Caco-2 (cell line): ENCODE measurements at regions of chr7 and their contacts with region 1.

Region 1: DNA sequence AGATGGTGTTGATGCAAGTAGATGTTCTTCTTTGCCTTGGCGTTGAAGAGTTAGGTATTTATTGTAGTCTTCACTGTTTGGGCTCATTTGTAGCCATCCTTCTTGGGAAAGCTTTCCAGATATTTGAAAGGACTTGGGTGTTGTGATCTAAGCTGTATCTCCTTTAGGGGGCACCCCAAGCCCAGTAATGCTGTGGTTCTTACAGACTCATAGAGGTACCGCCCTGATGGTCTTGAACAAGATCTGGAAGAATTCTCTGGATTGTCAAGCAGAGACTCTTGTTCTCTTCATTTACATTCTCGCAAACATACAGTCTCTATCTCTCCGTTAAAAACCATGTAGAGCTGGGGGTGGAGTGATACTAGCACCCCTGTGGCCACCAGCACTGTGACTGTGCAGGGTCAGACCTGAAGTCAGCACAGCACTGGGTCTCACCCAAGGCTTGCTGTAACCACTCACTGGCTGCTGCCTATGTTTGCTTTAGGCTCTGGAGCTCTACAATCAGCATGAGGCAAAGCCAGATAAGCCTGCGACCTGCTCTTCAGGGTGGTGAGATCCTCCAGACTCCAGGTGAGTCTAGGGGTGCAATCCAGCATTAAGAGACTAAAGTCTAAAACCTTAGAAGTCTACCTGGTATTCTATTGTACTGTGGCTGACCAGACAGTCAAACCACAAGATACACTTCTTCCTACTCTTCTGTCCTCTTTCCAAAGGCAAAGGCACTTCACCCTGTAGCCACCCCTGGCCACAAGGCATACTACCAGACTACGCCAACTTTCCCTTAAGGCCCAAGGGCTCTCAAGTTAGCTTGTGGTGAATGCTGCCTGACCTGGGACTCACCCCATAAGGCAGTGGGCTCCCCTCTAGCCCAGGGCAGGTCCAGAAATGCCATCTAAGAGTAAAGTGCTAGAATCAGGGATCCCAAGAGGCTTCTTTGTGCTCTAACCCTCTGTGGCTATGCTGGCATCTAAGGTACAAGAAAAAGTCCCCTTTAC is 209.7 kb upstream of the TMEM196 start:
- DNase-seq: peak; percentile 81 to 82
- H3K4me3 ChIP-seq: no peak overlapping the region
- H3K4me3 Mint-ChIP-seq: no peak overlapping the region
- H3K27ac Mint-ChIP-seq: peak overlapping the region; percentile 37
- H3K4me1 ChIP-seq: peaks cover 14% of the 10 kb centered on the region
- H3K4me1 Mint-ChIP-seq: peaks cover 10% of the 10 kb centered on the region
- H3K27me3 ChIP-seq: no peaks in the 10 kb centered on the region
- H3K27me3 Mint-ChIP-seq: no peaks in the 10 kb centered on the region
- CTCF ChIP-seq: peak; percentile 46 to 63

Region 2: DNA sequence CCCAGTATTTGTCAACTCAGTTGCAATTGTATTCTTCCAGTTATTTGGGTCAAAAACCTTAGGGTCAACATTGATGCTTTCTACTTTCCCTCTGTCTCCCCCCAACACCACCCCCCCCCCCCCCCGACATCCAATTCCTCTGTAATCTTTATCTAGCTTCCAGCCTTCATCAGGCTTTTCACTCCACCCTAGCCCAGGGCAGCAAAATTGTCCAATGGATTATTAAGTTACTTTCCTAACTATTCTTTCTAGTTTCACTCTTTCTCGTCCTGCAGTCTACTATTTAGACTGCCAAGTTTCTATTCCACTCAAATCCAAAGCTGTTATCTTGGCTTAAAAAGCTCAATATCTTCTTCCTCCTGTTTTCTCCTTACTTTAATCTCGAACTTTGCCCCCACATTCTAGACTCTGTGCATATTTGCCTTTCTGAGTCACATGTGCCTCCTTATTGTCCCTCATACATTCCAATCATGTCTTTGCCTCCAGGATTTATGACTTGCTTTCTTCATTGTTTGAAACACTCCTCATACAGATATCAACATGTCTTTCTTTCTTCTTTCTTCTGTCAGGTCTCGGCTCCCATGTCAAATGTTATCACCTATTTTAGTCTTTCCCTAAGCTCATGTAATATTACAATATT is 13.2 kb before region 1 on chr7:
- CTCF ChIA-PET with region 1: interaction called, 11 read pairs
- POLR2A ChIA-PET with region 1: no interaction called
- intact Hi-C with region 1: no loop called
- DNase-seq: peak; percentile 79 to 83
- H3K4me3 ChIP-seq: no peak overlapping the region
- H3K4me3 Mint-ChIP-seq: peak overlapping the region; percentile 55
- H3K27ac Mint-ChIP-seq: peak overlapping the region; percentile 86
- H3K4me1 ChIP-seq: peaks cover 44% of the 10 kb centered on the region
- H3K4me1 Mint-ChIP-seq: peaks cover 26% of the 10 kb centered on the region
- H3K27me3 ChIP-seq: no peaks in the 10 kb centered on the region
- H3K27me3 Mint-ChIP-seq: no peaks in the 10 kb centered on the region
- CTCF ChIP-seq: no peak

Region 3: DNA sequence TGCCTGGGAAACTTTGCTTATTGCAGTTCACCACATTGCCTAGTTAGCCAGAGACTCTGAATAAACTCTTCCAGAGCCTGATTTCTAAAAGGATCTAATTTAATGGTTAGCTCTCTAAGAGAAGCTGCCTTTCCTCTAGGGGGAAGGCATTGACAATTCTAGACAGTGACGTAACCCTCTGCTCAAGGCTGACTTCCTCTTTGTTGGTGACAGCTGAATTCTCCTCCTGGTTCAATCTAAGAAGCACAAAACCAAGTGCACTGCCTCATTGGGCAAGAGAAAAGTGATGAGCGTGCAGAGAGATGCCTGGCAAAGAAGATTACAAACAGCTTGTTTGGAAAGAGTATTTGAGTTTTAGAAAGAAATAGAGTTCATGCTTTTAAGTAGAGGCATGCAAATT is 131.3 kb after region 1 on chr7:
- CTCF ChIA-PET with region 1: no interaction called
- POLR2A ChIA-PET with region 1: no interaction called
- intact Hi-C with region 1: loop called (anchors 5 kb)
- DNase-seq: no peak
- H3K4me3 ChIP-seq: no peak overlapping the region
- H3K4me3 Mint-ChIP-seq: no peak overlapping the region
- H3K27ac Mint-ChIP-seq: no peak overlapping the region
- H3K4me1 ChIP-seq: peaks cover 22% of the 10 kb centered on the region
- H3K4me1 Mint-ChIP-seq: peaks cover 5% of the 10 kb centered on the region
- H3K27me3 ChIP-seq: no peaks in the 10 kb centered on the region
- H3K27me3 Mint-ChIP-seq: no peaks in the 10 kb centered on the region
- CTCF ChIP-seq: no peak

Region 4: GRCh38 chr7:20172736-20173334 is 189.7 kb after region 1 on chr7:
- CTCF ChIA-PET with region 1: interaction called, 17 read pairs
- POLR2A ChIA-PET with region 1: no interaction called
- intact Hi-C with region 1: loop called (anchors 1 kb)
- DNase-seq: peak; percentile 78 to 82
- H3K4me3 ChIP-seq: no peak overlapping the region
- H3K4me3 Mint-ChIP-seq: no peak overlapping the region
- H3K27ac Mint-ChIP-seq: no peak overlapping the region
- H3K4me1 ChIP-seq: peaks cover 6% of the 10 kb centered on the region
- H3K4me1 Mint-ChIP-seq: peaks cover 21% of the 10 kb centered on the region
- H3K27me3 ChIP-seq: no peaks in the 10 kb centered on the region
- H3K27me3 Mint-ChIP-seq: no peaks in the 10 kb centered on the region
- CTCF ChIP-seq: peak; percentile 69 to 88

Region 5: DNA sequence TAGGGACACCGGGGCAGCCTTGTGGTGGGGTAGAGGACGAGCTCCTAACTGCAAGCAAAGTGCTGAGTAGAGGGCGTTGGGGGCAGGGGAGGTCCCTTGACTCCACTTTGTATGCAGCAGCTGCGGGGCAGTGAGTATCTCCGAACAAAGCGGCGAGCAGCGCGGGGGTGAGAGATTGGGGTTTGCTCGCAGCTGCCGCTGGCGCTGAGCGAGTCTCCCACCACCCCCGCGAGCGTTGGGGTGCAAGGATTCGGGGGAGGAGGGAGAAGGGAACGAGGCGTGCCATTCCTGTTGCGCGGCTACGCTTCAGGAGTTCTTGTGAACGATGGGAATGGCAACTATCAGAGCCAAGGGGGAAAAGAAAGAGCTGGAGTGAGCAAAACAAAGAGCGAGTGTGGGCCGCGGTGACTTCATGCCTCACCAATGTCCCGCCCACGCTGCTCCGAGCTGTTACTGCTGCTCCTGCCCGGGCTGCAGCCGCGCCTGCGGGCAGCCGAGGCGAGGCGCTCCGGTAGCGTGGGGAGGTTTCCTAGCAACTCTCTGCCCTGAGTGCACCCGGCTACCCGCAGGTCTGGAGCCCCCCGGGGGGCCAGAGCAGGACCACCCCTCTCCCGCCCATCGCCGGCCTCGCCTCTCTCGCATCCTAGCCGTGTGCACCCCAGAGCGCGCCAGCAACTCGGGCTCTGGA is 347.2 kb after region 1 on chr7 and contains the start of gene ITGB8:
- CTCF ChIA-PET with region 1: interaction called, 9 read pairs
- POLR2A ChIA-PET with region 1: no interaction called
- intact Hi-C with region 1: loop called (anchors 5 kb)
- DNase-seq: peak; percentile 76 to 77
- H3K4me3 ChIP-seq: peak within 1 kb of the TSS; percentile 91
- H3K4me3 Mint-ChIP-seq: peak within 1 kb of the TSS; percentile 85
- H3K27ac Mint-ChIP-seq: peak within 1 kb of the TSS; percentile 88
- H3K4me1 ChIP-seq: peaks cover 4% of the 10 kb centered on the region; the same call in 1 of the 2 replicates
- H3K4me1 Mint-ChIP-seq: no peaks in the 10 kb centered on the region
- H3K27me3 ChIP-seq: no peaks in the 10 kb centered on the region
- H3K27me3 Mint-ChIP-seq: no peaks in the 10 kb centered on the region
- CTCF ChIP-seq: no peak
- total RNA-seq, gene ITGB8: 3.2 and 4.6 TPM in 2 replicates

Region 6: GRCh38 chr7:20647908-20648776 is 665.0 kb after region 1 on chr7:
- CTCF ChIA-PET with region 1: no interaction called
- POLR2A ChIA-PET with region 1: no interaction called
- intact Hi-C with region 1: loop called (anchors 1 kb)
- DNase-seq: peak; percentile 62 to 64
- H3K4me3 ChIP-seq: no peak overlapping the region
- H3K4me3 Mint-ChIP-seq: no peak overlapping the region
- H3K27ac Mint-ChIP-seq: no peak overlapping the region
- H3K4me1 ChIP-seq: no peaks in the 10 kb centered on the region
- H3K4me1 Mint-ChIP-seq: peaks cover 7% of the 10 kb centered on the region
- H3K27me3 ChIP-seq: no peaks in the 10 kb centered on the region
- H3K27me3 Mint-ChIP-seq: no peaks in the 10 kb centered on the region
- CTCF ChIP-seq: peak; percentile 60 to 67